ENCODE measurements at regions of chr1 and their contacts with region 1.

Region 1: GRCh38 chr1:207605444-207606361 is 39.2 kb upstream of the CR1L start:
- DNase-seq: no peak
- H3K27ac ChIP-seq: no peak overlapping the region
- CTCF ChIP-seq: no peak

Region 2: GRCh38 chr1:207619871-207620542 is 14.3 kb after region 1 on chr1:
- CTCF ChIA-PET with region 1: interaction called, 12 read pairs
- POLR2A ChIA-PET with region 1: no interaction called
- DNase-seq: peak; percentile 41
- H3K27ac ChIP-seq: no peak overlapping the region
- CTCF ChIP-seq: peak; percentile 76